Transverse colon (tissue), 4 donors: ENCODE measurements at regions of chrX and their contacts with region 1.

Region 1: DNA sequence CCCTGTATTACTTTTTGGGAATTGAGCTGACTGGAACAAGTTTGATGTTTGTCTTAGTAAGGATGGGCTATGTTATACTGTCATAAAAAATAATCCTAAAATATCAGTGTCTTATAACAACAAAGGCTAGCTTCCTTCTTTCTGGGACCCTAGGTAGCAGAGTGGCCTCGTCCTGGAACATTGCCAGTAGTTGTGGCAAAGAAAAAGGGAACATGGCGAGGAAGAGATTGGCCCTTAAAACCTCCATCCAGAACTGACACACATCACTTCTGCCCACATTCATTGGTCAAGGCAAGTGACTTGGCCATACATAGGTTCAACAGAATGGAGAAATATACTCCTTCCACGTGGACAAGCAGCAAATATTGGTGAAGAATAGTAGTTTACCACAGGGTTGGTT is 287.9 kb downstream of the PPP1R2C start:
- DNase-seq: no peak
- H3K4me3 ChIP-seq: no peak overlapping the region
- H3K27ac ChIP-seq: no peak overlapping the region
- H3K4me1 ChIP-seq: no peaks in the 10 kb centered on the region
- H3K27me3 ChIP-seq: no peaks in the 10 kb centered on the region
- CTCF ChIP-seq: no peak
- EP300 ChIP-seq: no peak
- POLR2A ChIP-seq: no peak

Region 2: DNA sequence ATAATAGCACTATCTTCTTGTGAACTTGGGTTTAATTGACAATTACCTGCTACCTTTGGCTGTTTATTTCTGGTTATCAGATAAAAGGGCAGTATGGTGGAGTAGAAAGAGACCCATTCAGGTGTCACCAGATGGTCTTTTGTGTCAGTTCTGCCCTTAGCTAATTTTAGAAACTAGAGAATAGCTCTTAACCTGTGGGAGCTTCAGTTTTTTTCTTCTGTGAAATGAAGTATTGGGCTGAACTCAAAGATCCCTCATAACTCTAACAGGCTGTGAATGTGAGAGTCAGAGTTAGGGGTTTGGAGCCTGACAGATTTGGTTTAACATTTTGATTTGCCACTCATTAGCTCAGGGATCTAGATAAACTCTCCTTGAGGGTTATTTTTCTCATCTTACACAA is 47.4 kb before region 1 on chrX:
- in situ Hi-C with region 1: no loop called
- intact Hi-C with region 1: no loop called
- DNase-seq: no peak
- H3K4me3 ChIP-seq: no peak overlapping the region
- H3K27ac ChIP-seq: no peak overlapping the region
- H3K4me1 ChIP-seq: no peaks in the 10 kb centered on the region
- H3K27me3 ChIP-seq: no peaks in the 10 kb centered on the region
- CTCF ChIP-seq: no peak
- EP300 ChIP-seq: no peak
- POLR2A ChIP-seq: no peak

Region 3: GRCh38 chrX:42530027-42530426 is 39.9 kb after region 1 on chrX:
- in situ Hi-C with region 1: no loop called
- intact Hi-C with region 1: loop called (anchors 1 kb)
- DNase-seq: no peak
- H3K4me3 ChIP-seq: no peak overlapping the region
- H3K27ac ChIP-seq: no peak overlapping the region
- H3K4me1 ChIP-seq: no peaks in the 10 kb centered on the region
- H3K27me3 ChIP-seq: no peaks in the 10 kb centered on the region
- CTCF ChIP-seq: no peak
- EP300 ChIP-seq: no peak
- POLR2A ChIP-seq: no peak

Region 4: DNA sequence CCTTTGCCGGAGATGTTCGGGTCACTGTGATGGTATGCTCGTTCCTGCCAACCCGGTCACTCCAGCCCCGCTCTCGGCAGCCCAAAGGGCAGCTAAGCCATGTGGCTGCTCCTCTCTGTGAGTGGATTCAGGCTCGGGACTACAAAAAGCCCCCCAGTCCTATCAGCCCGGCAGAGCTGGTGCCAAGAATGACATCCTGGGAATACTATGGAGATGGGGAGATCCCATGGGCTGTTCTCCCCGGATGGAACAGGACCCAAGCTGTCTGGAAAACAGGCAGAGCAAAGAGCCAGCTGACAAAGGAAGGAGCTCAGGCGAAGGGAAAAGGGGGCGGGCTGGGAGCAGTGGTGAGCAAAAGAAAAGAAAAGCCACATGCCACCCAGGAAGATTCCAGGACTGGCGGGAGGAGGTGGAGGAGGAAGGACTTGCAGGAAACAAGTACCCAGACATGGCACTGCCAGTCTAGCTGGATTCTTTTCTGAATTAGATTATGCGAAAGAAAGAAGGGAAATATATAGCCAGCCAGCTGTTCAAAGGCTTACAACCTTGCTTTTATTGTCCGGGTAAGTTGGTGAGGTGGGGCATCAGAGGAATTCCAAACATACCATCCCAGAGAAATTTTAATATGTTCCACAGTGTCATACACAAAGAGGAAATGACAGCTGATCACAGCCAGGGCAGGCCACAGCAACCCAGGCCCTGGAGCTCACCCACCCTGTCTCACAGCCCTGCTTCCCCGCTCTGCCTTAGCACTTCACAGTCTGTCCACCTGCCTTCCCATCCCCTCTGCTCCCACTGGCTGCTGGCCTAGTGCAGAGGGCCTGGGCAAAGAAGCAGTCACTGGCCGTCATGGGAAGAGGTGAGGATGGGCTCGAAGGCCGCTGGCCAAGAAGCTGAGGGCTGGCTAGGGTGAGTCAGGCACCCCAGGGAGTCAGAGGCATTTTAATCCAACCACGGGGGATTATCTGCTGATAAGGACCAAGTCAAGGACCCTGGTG is 1479.7 kb after region 1 on chrX:
- in situ Hi-C with region 1: no loop called
- intact Hi-C with region 1: no loop called
- DNase-seq: no peak
- H3K4me3 ChIP-seq: no peak overlapping the region
- H3K27ac ChIP-seq: no peak overlapping the region
- H3K4me1 ChIP-seq: peaks cover 0 to 2% (median 1%) of the 10 kb centered on the region in 4 donors
- H3K27me3 ChIP-seq: no peaks in the 10 kb centered on the region
- CTCF ChIP-seq: no peak
- EP300 ChIP-seq: no peak
- POLR2A ChIP-seq: no peak